Posterior cingulate gyrus (tissue), 11 donors: ENCODE measurements at regions of chr12 and their contacts with region 1.

Region 1: DNA sequence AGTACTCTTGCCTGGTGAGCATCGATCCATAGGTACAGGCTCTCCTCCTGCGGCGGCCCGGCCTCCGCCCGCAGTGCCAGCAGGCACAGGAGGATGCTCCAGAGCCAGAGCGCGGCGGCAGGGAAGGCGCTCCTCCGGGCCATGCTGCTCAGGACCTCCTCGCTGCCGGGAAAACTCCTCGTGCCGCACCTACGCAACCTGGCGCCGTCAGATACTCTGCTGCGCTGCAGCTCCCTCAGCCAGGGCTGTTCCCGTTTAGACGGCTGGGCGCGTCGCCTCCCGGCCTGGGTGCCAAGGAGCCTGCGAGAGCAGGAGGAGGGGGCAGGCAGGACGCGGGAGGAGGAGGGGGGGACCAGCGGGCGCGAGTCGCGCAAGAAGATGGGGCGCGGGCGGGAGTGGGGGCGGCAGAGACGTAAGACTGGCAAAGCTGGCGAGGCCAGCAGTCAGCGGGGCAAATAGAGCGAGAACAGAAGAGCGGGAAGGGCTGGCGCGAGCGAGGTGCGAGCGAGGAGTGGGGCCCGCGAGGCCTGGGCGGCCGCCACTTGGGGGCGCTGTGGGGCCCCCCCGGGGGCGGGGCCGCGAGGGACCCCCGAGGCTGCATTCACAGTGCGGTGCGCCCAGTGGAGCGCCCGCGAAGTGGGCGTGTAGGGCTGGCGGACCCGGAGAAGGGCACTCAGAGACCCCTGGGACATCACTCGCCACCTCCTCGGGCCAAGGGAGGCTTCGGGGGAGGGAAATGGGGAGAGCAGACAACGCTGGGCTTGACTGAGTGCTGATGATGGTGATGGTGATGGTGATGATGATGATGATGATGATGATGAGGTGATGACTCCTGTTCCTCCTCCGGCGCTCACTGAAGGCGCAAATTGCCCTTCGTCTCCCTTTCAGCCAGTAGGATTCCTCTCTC is at the start of gene WIF1:
- DNase-seq: peak in 9 of 10 donors; percentile 9 to 92 (median 40)

Region 2: GRCh38 chr12:64544371-64545080 is 576.8 kb before region 1 on chr12:
- intact Hi-C with region 1: no loop called
- DNase-seq: no peak

Region 3: GRCh38 chr12:64801381-64801780 is 319.9 kb before region 1 on chr12:
- intact Hi-C with region 1: loop called (anchors 5 kb)
- DNase-seq: no peak

Region 4: GRCh38 chr12:65067383-65067782 is 53.9 kb before region 1 on chr12:
- intact Hi-C with region 1: no loop called
- DNase-seq: no peak

Region 5: DNA sequence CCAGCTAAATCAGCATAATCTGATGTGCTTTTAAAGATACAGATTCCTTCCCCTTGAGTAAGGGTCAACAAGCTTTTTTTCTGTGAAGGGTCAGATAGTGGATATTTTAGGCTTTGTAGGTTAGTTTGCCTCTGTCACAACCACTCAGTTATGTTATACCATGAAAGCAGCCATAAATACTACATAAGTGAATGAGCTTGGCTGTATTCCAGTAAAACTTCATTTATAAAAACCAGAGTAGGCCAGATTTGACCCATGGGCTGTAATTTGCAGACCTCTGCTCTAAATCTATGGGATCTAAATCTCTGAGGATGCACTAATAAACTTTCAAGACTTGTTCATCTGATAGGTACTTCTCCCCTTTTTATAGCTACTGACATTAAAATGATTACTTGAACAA is 95.8 kb after region 1 on chr12:
- intact Hi-C with region 1: no loop called
- DNase-seq: no peak